Activated T-helper 2 cell treated with anti-CD3 and anti-CD28 coated beads, Interferon-gamma antibody, Interleukin-2, Interleukin-4, amounts not matched to agents 10 μg/mL and 5 μg/mL and 100 μg/mL, durations not matched to agents 14 hours and 24 hours and 36 hours (primary cell): ENCODE measurements at regions of chr2 and their contacts with region 1.

Region 1: GRCh38 chr2:147297820-147298219 is 547.0 kb upstream of the ACVR2A start:
- DNase-seq: peak; percentile 40
- H3K4me3 Mint-ChIP-seq: peak overlapping the region; percentile 9
- H3K27ac Mint-ChIP-seq: peak overlapping the region; percentile 80
- H3K4me1 Mint-ChIP-seq: peaks cover 62% of the 10 kb centered on the region
- H3K27me3 Mint-ChIP-seq: no peaks in the 10 kb centered on the region

Region 2: DNA sequence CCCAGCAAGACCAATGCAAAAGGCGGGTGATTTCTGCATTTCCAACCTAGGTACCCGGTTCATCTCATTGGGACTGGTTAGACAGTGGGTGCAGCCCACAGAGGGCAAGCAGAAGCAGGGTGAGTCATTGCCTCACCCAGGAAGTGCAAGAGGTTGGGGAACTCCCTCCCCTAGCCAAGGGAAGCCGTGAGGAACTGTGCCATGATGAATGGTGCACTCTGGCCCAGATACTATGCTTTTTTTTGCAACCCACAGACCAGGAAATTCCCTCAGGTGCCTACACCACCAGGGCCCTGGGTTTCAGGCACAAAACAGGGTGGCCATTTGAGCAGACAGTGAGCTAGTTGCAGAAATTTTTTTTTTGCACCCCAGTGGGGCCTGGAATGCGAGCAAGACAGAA is 115.6 kb before region 1 on chr2:
- intact Hi-C with region 1: loop called (anchors 2 kb)
- DNase-seq: peak; percentile 23
- H3K4me3 Mint-ChIP-seq: no peak overlapping the region
- H3K27ac Mint-ChIP-seq: peak overlapping the region; percentile 60
- H3K4me1 Mint-ChIP-seq: peaks cover 17% of the 10 kb centered on the region
- H3K27me3 Mint-ChIP-seq: no peaks in the 10 kb centered on the region

Region 3: GRCh38 chr2:147490401-147491261 is 192.8 kb after region 1 on chr2:
- intact Hi-C with region 1: loop called (anchors 5 kb)
- DNase-seq: no peak
- H3K4me3 Mint-ChIP-seq: peak overlapping the region; percentile 47
- H3K27ac Mint-ChIP-seq: peak overlapping the region; percentile 66
- H3K4me1 Mint-ChIP-seq: peaks cover 40% of the 10 kb centered on the region
- H3K27me3 Mint-ChIP-seq: peaks cover 3% of the 10 kb centered on the region

Region 4: DNA sequence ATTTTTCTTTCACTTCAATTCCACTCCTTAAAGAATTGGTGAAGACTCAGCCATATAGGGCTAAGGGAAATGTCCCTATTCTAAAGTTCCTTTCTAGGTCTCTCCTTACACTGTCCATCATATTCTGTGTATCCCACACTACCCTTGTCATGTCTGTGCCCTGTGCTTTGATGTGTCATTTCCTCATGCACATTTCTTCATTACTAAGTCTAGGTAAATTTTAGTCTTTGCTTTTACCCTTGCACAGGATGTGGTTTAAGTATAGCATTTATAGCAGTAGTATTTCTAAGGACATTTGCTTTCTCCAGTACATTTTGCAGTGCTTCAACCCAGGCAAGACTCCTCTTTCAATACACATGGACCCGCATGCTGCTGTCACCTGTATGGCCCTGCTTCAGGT is 325.5 kb after region 1 on chr2:
- intact Hi-C with region 1: loop called (anchors 2 kb)
- DNase-seq: no peak
- H3K4me3 Mint-ChIP-seq: no peak overlapping the region
- H3K27ac Mint-ChIP-seq: peak overlapping the region; percentile 64
- H3K4me1 Mint-ChIP-seq: peaks cover 29% of the 10 kb centered on the region
- H3K27me3 Mint-ChIP-seq: peaks cover 1% of the 10 kb centered on the region

Region 5: DNA sequence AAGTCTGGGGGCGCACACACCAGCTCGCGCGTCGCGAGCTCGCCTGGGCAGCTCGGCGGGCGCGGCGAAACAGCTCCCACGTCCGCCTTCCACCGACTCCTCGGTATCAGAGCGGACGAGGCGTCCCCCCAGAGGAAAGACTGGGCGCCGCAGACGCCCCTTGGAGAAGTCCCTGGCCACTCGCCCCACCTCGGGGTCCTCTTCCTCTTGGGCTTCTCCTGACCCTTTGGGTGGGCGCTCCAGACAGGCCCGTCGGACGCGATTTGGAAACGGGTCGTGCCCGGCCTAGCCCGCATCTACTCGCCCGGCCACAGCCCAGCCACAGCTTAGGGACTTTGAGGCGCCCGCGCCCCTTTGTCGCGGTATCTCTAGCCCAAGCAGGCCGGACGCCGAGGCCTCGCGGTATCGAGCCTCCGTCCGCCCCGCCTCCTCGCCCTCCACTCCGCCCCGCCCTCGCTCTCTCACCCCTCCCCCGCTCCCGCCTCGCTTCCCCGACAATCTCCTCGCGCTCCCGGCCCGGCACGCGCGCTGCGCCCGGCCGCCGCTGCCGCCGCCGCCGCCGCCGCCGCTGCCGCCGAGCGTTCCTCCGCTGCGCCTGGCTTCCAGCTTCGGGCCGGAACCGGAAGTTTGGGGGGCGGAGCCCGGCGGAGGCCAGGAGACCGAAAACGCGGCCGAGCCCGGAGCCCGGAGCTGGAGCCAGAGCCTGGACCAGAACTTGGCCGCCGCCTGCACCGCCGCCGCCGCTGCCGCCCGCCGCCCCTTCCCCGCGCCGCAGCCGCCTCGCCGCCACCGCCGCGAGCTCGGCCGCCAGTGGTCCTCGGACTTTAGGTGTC is 546.3 kb after region 1 on chr2:
- intact Hi-C with region 1: loop called (anchors 2 kb)
- DNase-seq: peak; percentile 78
- H3K4me3 Mint-ChIP-seq: peak overlapping the region; percentile 82
- H3K27ac Mint-ChIP-seq: no peak overlapping the region
- H3K4me1 Mint-ChIP-seq: peaks cover 18% of the 10 kb centered on the region
- H3K27me3 Mint-ChIP-seq: peaks cover 71% of the 10 kb centered on the region

Region 6: DNA sequence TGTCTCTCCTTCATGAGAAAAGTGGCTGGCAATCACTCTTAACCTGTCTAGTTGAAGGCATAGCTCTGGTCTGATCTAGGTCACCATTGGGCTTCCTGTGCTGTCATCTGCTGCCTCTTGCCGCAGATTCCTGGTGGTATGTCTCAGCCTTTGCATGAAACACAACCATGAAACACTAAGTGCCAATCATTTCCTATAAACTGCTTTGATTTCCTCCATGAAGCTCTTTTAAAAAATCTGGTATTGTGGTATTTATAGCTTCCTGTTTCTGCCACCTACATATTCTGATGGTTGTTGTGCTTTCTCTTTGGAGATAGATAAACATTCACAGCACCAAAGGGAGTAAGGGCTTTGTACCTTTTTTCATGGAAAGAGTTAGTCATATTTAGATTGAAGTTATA is 1226.7 kb after region 1 on chr2:
- intact Hi-C with region 1: loop called (anchors 10 kb)
- DNase-seq: peak; percentile 53
- H3K4me3 Mint-ChIP-seq: no peak overlapping the region
- H3K27ac Mint-ChIP-seq: peak overlapping the region; percentile 69
- H3K4me1 Mint-ChIP-seq: peaks cover 61% of the 10 kb centered on the region
- H3K27me3 Mint-ChIP-seq: no peaks in the 10 kb centered on the region